ENCODE measurements at regions of chr7 and their contacts with region 1.

Region 1: DNA sequence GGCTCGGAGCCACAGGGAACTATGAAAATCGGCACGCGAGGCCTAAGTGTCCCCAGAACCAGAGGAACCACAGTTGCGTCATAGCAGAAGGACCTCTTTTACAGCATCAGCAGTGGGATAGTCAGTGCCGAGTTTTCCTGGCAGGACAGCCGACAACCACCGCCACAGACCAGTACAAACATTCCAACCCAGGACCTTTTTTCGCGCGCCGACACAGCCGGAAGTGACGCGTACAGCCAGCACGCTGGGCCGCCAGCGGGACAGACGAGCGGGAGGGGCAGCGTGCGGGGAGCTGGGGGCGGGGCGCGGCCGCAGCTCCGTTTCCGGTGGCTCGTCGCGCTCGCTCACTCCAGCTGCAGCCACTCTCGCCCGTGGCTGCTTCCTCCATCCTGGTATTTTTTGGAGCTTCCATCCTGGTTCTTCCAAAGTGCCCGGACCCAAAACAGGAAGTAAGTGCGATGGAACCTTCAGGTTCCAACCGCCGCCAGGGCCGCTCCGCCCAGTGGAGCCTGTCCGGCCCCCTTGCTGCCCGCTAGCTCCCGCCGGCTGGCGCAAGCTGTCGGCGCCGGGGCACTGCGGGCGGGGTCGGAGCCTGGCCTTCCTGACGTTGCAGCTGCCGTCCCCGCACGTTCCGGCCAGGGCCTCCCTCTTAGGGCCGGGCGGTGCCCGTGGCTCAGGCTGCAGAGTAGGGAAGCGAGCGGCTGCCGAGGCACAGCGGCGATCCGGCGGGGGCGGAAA is at the start of gene DMTF1:
- DNase-seq: peak; percentile 89
- ATAC-seq: peak; percentile 83
- H3K4me3 Mint-ChIP-seq: peak within 1 kb of the TSS; percentile 94
- H3K27ac Mint-ChIP-seq: peak within 1 kb of the TSS; percentile 97
- H3K4me1 Mint-ChIP-seq: peaks cover 43% of the 10 kb centered on the region
- H3K27me3 Mint-ChIP-seq: peaks cover 2% of the 10 kb centered on the region
- total RNA-seq, gene DMTF1: 94.7 to 96.8 TPM

Region 2: DNA sequence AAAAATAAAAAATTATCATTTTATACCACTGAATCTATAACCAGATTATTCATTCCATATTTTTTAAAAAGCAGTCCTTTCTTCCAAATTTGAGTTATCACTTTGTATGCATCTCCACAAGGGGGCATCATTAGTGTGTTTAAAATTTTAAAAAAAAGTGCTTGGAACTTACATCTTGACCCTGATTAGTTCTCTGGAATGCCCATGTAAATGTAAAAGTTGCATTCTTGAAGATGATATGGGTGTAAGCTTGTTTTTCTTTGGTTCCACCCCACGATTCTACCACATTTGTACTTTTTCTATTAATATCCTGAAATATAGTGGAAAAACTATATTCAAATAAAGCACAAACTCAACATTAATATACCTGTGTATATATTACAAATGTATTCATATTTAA is 237.7 kb before region 1 on chr7:
- CTCF ChIA-PET with region 1: interaction called, 12 read pairs
- POLR2A ChIA-PET with region 1: no interaction called
- DNase-seq: no peak
- ATAC-seq: no peak
- H3K4me3 Mint-ChIP-seq: no peak overlapping the region
- H3K27ac Mint-ChIP-seq: no peak overlapping the region
- H3K4me1 Mint-ChIP-seq: no peaks in the 10 kb centered on the region
- H3K27me3 Mint-ChIP-seq: peaks cover 7% of the 10 kb centered on the region

Region 3: DNA sequence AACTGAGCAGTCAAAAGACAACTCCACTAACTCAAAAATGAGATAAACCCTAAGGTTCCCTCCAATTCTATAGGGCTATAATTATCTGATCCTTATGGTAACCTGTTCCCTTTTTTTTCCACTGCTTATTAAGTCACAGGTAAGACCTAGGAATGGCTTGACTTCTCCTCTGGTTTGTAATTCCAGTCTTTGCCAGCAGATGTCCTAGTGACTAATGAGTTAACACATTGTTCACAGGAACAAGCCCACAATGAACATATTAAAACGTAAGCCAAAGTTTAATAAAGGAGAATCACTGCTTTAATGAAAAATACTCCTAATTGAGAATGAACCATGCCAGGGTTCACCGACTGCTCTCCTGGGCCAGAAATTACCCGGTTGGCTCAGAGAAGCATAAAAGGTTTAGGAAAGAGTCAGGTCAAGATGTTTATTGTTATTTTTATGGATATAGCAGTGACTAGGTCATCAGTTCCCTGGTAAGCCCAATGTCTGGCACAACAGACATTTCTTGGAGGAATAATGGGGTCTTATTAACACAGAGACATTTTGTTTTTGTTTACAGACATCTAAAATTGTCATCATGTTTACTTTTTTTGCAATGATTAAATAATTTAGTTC is 213.0 kb before region 1 on chr7:
- CTCF ChIA-PET with region 1: interaction called, 43 read pairs
- POLR2A ChIA-PET with region 1: no interaction called
- DNase-seq: peak; percentile 56
- ATAC-seq: peak; percentile 65
- H3K4me3 Mint-ChIP-seq: no peak overlapping the region
- H3K27ac Mint-ChIP-seq: no peak overlapping the region
- H3K4me1 Mint-ChIP-seq: no peaks in the 10 kb centered on the region
- H3K27me3 Mint-ChIP-seq: peaks cover 5% of the 10 kb centered on the region

Region 4: GRCh38 chr7:87106974-87107612 is 45.2 kb before region 1 on chr7:
- CTCF ChIA-PET with region 1: no interaction called
- POLR2A ChIA-PET with region 1: no interaction called
- DNase-seq: no peak
- ATAC-seq: no peak
- H3K4me3 Mint-ChIP-seq: no peak overlapping the region
- H3K27ac Mint-ChIP-seq: no peak overlapping the region
- H3K4me1 Mint-ChIP-seq: no peaks in the 10 kb centered on the region
- H3K27me3 Mint-ChIP-seq: peaks cover 14% of the 10 kb centered on the region

Region 5: GRCh38 chr7:87188930-87189329 is 36.7 kb after region 1 on chr7:
- CTCF ChIA-PET with region 1: interaction called, 6 read pairs
- POLR2A ChIA-PET with region 1: interaction called, 13 read pairs
- DNase-seq: no peak
- ATAC-seq: no peak
- H3K4me3 Mint-ChIP-seq: no peak overlapping the region
- H3K27ac Mint-ChIP-seq: no peak overlapping the region
- H3K4me1 Mint-ChIP-seq: peaks cover 9% of the 10 kb centered on the region
- H3K27me3 Mint-ChIP-seq: no peaks in the 10 kb centered on the region

Region 6: GRCh38 chr7:87219545-87220025 is 67.3 kb after region 1 on chr7 and contains the start of gene TMEM243:
- CTCF ChIA-PET with region 1: interaction called, 37 read pairs
- POLR2A ChIA-PET with region 1: interaction called, 146 read pairs
- DNase-seq: peak; percentile 88
- ATAC-seq: peak; percentile 73
- H3K4me3 Mint-ChIP-seq: peak within 1 kb of the TSS; percentile 99
- H3K27ac Mint-ChIP-seq: peak within 1 kb of the TSS; percentile 99
- H3K4me1 Mint-ChIP-seq: peaks cover 37% of the 10 kb centered on the region
- H3K27me3 Mint-ChIP-seq: peaks cover 6% of the 10 kb centered on the region
- total RNA-seq, gene TMEM243: 39.6 to 42.4 TPM

Region 7: DNA sequence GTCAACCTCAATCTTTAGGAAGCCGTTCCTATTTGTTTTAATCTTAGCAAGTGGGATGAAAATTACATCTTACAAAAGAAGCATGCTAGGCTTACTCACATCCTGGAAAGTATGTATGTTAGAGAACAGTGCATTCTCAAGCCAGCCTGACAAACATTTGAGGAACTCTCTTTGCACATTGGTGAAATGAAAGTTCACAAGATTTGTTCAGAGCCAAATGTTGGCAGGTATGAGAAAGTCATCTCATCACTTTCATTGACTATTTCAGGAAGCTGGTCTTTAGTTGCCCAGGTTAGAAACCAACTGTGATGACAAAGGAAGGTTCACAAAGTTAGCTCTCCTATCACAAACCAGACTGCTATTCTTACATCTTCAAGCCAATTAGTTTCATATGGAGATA is 391.3 kb after region 1 on chr7:
- CTCF ChIA-PET with region 1: no interaction called
- POLR2A ChIA-PET with region 1: no interaction called
- DNase-seq: no peak
- ATAC-seq: no peak
- H3K4me3 Mint-ChIP-seq: no peak overlapping the region
- H3K27ac Mint-ChIP-seq: no peak overlapping the region
- H3K4me1 Mint-ChIP-seq: peaks cover 7% of the 10 kb centered on the region
- H3K27me3 Mint-ChIP-seq: no peaks in the 10 kb centered on the region

Measured in activated CD8-positive, alpha-beta T cell treated with anti-CD3 and anti-CD28 coated beads, Interleukin-2, amount 10 ng/mL, durations not matched to agents 7 days and 5 days (primary cell).